ENCODE measurements at regions of chr1 and their contacts with region 1.

Region 1: GRCh38 chr1:212665241-212666115 is 34.2 kb downstream of the BATF3 start:
- DNase-seq: peak; percentile 85
- H3K4me3 Mint-ChIP-seq: peak overlapping the region; percentile 74
- H3K27ac Mint-ChIP-seq: peak overlapping the region; percentile 71
- H3K4me1 Mint-ChIP-seq: peaks cover 47% of the 10 kb centered on the region
- H3K27me3 Mint-ChIP-seq: peaks cover 9% of the 10 kb centered on the region

Region 2: DNA sequence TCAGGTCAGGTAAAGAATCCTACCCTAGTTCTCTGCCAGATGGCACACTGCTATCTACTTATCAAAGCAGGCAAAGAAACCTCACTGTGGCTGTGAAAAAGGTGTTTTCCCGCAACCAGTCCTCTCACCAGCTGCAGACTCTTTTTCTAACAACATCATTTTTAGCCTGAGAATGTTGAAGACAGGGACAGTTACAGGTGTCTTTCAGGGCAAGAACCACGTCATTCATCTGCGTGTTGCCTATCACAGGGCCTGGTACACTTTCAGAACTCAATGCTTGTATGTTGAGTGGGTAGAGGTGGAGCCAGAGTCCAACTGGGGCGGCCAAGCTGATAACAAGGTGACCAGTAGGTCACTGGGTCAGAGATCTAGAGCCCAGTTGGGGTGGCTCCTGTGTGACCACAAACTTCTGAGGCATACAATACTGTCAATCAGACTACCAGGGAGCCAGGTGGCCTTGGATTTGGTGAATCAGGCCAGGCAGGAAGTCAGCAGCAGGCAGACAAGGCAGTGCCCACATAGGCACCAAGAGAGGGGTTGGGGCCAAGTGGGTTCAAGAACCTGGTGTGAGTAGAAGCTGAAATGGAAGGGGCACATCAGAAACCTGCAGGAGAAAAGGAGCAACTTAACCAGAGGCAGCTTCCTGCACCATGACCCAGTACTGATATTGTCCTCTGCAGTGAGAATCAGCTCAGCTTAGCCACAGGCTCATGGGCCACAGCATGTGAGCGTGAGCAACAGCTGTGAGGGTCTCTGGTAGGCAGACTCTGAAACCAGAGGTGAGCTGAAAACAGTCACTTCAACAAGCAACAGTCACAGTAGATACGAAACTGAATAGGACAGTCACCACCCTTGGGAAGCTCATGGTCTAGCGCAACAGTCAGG is 506.3 kb before region 1 on chr1:
- CTCF ChIA-PET with region 1: no interaction called
- POLR2A ChIA-PET with region 1: no interaction called
- DNase-seq: no peak
- H3K4me3 Mint-ChIP-seq: no peak overlapping the region
- H3K27ac Mint-ChIP-seq: no peak overlapping the region
- H3K4me1 Mint-ChIP-seq: peaks cover 30% of the 10 kb centered on the region
- H3K27me3 Mint-ChIP-seq: no peaks in the 10 kb centered on the region

Region 3: GRCh38 chr1:212396638-212397037 is 268.8 kb before region 1 on chr1:
- CTCF ChIA-PET with region 1: no interaction called
- POLR2A ChIA-PET with region 1: no interaction called
- DNase-seq: no peak
- H3K4me3 Mint-ChIP-seq: no peak overlapping the region
- H3K27ac Mint-ChIP-seq: no peak overlapping the region
- H3K4me1 Mint-ChIP-seq: no peaks in the 10 kb centered on the region
- H3K27me3 Mint-ChIP-seq: no peaks in the 10 kb centered on the region

Region 4: DNA sequence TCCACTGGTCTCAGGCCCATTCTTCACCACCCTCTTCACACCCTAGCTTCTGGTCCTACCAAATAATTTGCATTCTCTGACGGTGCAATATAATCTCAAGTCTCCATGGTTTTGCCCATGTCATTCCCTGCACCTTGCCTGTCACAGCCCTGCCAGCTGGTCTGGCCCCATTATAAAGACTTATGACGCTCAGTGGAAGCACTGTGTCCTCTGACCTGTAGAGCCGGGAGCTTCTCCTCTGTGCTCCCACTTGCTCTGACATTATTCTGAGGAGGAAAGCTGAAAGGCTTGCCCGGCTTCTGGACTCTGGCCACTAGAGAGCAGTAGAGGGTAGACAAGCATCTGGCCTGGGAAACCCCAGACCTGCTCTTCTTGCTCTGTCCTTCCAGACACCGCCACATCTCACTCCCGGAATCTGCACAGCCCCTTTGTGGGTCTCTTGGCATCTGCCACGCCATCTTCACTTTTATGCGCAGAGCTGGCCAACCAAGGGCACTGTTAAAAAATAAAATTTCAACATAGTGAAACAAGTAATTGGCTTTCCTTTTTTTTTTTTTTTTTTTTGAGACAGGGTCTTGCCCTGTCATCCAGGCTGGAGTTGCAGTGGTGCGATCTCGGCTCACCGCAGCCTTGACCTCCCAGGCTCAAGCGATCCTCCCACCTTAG is 188.3 kb before region 1 on chr1:
- CTCF ChIA-PET with region 1: interaction called, 30 read pairs
- POLR2A ChIA-PET with region 1: no interaction called
- DNase-seq: peak; percentile 79
- H3K4me3 Mint-ChIP-seq: no peak overlapping the region
- H3K27ac Mint-ChIP-seq: no peak overlapping the region
- H3K4me1 Mint-ChIP-seq: peaks cover 19% of the 10 kb centered on the region
- H3K27me3 Mint-ChIP-seq: peaks cover 19% of the 10 kb centered on the region

Region 5: GRCh38 chr1:212488397-212489283 is 176.8 kb before region 1 on chr1:
- CTCF ChIA-PET with region 1: no interaction called
- POLR2A ChIA-PET with region 1: no interaction called
- DNase-seq: peak; percentile 47
- H3K4me3 Mint-ChIP-seq: no peak overlapping the region
- H3K27ac Mint-ChIP-seq: no peak overlapping the region
- H3K4me1 Mint-ChIP-seq: peaks cover 4% of the 10 kb centered on the region
- H3K27me3 Mint-ChIP-seq: peaks cover 4% of the 10 kb centered on the region

Region 6: DNA sequence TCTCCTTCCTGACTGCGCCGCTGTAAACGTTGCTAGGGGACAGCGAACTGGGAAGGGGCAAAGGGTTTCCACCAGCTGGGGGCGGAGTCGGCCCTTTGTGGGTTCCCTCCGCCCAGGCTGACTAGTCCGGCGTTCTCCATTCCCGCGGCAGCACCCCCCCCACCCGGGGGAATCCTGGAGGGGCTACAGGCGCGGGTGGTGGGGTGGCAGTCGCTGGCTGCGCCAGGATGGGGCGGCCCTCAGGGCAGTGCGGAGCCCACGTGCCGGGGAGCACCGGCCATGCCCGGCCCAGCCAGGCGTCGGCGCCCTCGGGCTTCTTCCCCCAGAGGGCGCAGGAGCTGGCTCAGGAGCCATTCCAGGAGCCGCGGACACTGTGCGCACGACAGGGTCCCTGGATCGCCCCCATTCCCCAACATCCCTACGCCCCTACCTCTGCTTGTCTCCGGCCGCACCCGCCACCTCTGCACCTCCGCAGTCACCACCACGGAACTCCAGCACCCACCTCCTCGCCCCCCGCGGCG is 33.7 kb after region 1 on chr1:
- CTCF ChIA-PET with region 1: interaction called, 22 read pairs
- POLR2A ChIA-PET with region 1: interaction called, 5 read pairs
- DNase-seq: peak; percentile 66
- H3K4me3 Mint-ChIP-seq: peak overlapping the region; percentile 74
- H3K27ac Mint-ChIP-seq: peak overlapping the region; percentile 77
- H3K4me1 Mint-ChIP-seq: peaks cover 75% of the 10 kb centered on the region
- H3K27me3 Mint-ChIP-seq: peaks cover 2% of the 10 kb centered on the region

Region 7: DNA sequence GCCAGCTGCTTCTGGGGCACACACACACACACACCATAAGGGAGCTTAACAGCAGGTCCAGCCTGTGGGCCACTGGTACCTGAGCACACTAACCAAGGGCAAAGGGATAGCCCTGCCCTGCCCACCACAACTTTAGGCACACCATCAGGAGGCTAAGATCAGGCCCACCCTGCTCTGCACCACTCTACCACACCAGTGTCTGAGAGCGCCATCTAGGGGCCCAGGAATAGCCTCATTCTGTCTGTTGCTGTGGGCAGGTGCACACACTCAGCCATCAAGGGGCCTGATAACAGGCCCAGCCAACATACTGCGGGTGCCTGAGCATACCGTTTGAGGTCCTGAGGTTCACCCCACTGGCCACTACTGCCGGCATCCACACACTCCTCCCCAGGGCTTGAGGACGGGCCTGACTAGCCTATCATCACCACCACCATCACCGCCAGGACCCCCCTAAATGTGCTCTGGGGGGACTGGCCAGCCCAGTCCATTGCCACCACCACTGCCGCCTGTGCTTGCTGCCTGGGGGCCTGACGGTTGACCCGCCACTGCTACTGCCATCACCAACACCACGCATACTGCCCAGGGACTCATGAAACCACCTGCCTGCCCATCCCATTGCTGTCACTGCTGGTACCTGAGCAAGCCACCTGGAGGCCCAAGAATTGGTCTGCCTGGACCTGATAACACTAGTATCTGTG is 94.8 kb after region 1 on chr1:
- CTCF ChIA-PET with region 1: interaction called, 29 read pairs
- POLR2A ChIA-PET with region 1: interaction called, 3 read pairs
- DNase-seq: peak; percentile 66
- H3K4me3 Mint-ChIP-seq: no peak overlapping the region
- H3K27ac Mint-ChIP-seq: no peak overlapping the region
- H3K4me1 Mint-ChIP-seq: peaks cover 19% of the 10 kb centered on the region
- H3K27me3 Mint-ChIP-seq: no peaks in the 10 kb centered on the region

Region 8: GRCh38 chr1:212782422-212783154 is 117.1 kb after region 1 on chr1:
- CTCF ChIA-PET with region 1: interaction called, 90 read pairs
- POLR2A ChIA-PET with region 1: interaction called, 3 read pairs
- DNase-seq: no peak
- H3K4me3 Mint-ChIP-seq: no peak overlapping the region
- H3K27ac Mint-ChIP-seq: no peak overlapping the region
- H3K4me1 Mint-ChIP-seq: peaks cover 20% of the 10 kb centered on the region
- H3K27me3 Mint-ChIP-seq: no peaks in the 10 kb centered on the region

Region 9: DNA sequence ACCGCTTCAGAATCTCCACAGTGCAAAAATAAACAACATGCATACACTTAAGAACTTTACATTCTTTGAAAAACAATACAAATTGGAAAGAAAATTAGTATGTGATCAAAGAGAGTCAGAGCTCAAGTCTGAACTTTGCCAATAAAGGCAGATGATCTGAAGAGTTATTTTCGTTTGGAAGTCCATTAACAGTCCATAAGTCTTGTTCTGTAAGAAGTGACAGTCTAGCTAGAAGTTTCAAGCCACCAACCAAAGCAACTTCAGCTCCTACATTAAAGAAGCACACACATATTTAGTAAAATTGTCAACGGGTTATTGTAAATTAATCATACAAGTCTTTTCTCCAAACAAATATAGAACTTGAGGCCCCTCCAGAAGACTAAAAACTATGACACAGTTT is 329.4 kb after region 1 on chr1:
- CTCF ChIA-PET with region 1: interaction called, 40 read pairs
- POLR2A ChIA-PET with region 1: interaction called, 3 read pairs
- DNase-seq: no peak
- H3K4me3 Mint-ChIP-seq: no peak overlapping the region
- H3K27ac Mint-ChIP-seq: no peak overlapping the region
- H3K4me1 Mint-ChIP-seq: peaks cover 3% of the 10 kb centered on the region
- H3K27me3 Mint-ChIP-seq: no peaks in the 10 kb centered on the region